ENCODE measurements at regions of chr7 and their contacts with region 1.

Region 1: DNA sequence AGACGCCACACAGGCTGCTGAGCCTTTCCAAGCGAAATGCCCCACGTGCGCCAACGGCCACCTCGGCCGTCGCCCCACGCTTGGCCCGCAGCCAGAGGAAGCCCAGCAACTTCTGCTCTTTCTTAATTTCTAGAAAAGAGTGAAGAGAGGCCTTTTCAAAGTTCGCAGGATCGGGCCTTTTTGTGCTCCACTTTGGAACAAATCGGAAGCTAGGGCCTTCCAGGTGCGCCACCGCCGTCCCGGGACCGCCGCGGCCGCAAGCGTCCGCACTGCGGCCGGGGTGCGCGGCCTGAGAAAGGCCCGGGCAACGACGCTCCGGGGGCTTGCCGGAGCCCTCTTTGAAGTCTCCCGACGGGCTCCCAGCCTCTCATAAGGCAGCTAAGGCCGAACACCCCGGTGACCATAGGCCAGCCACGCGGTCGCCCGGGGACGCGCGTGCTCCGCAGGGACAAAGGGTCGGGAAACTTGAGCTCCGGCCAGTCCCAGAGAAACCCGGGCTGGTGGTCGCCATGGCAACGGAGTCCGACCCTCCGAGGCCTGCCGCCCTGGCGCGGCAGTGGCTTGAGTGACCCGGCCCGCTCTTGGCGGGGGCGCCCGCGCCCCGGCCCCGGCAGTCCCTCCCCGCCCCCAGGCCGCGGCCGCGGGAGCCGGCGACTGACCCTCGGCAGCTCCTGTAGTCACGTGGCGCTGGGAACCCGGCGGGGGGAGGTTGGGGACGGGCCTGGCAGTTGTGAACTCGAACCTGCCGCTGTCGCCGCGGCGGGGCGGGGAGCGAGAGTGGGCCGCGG is at the start of gene REPIN1:
- DNase-seq: peak; percentile 58 to 91 (median 73)
- ATAC-seq: peak; percentile 45
- H3K4me3 ChIP-seq: peak within 1 kb of the TSS; percentile 83
- H3K4me3 Mint-ChIP-seq: peak within 1 kb of the TSS; percentile 99
- H3K27ac ChIP-seq: peak within 1 kb of the TSS; percentile 40 to 80
- H3K27ac Mint-ChIP-seq: peak within 1 kb of the TSS; percentile 96
- H3K4me1 ChIP-seq: peaks cover 47% of the 10 kb centered on the region
- H3K4me1 Mint-ChIP-seq: peaks cover 61% of the 10 kb centered on the region
- H3K27me3 ChIP-seq: no peaks in the 10 kb centered on the region
- H3K27me3 Mint-ChIP-seq: no peaks in the 10 kb centered on the region
- CTCF ChIP-seq: no peak
- total RNA-seq, gene REPIN1: 58.2 to 59.8 TPM

Region 2: DNA sequence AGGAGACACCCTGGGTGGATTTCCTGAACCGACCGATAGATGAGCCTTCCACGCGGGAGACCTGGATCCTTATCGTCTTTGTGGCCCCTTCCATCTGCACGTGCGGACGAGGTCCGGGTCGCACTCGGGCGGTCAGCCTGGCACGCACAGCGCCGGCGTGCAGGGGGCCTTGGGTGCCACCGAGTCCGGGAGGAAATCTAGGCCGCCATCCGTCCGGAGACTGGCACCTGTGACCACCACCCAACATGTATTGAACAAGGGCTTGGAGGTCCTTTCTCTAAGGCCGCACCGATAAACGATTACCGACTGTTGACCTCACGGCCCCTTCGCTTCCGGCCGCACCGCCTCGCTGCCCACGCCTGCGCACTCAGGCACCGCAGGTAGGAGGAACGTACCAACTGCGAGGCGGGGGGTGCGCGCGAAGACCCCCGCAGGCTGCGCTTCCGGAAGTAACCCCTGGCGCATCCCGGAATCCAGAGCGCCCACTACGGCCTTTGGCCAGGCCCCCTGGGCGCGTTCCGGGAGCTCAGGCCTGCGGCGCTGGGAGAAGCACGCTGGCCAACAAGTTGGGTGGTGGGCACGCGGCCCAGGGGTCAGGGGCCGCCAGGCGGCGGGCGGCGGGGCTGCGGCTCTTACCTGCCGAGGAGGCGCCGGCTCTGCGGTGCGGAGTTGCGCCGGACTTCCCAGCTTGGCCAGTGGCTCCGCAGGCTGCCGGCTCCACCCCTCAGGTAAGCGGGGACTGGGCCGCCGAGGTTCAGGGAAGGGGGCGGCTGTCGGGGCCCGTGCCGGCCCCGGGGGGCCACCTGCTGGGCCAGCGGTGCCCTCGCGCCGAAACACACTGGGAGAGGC is 45.2 kb before region 1 on chr7 and contains the starts of genes ACTR3C and LRRC61:
- CTCF ChIA-PET with region 1: no interaction called
- POLR2A ChIA-PET with region 1: no interaction called
- intact Hi-C with region 1: loop called in 1 of 2 experiments (anchors 5 kb)
- DNase-seq: peak; percentile 24 to 77 (median 54)
- ATAC-seq: peak; percentile 55
- H3K4me3 ChIP-seq: peak within 1 kb of the TSS; percentile 97
- H3K4me3 Mint-ChIP-seq: peak within 1 kb of the TSS; percentile 96
- H3K27ac ChIP-seq: peak within 1 kb of the TSS; percentile 77 to 79
- H3K27ac Mint-ChIP-seq: peak within 1 kb of the TSS; percentile 92
- H3K4me1 ChIP-seq: peaks cover 42% of the 10 kb centered on the region
- H3K4me1 Mint-ChIP-seq: peaks cover 42% of the 10 kb centered on the region
- H3K27me3 ChIP-seq: no peaks in the 10 kb centered on the region
- H3K27me3 Mint-ChIP-seq: no peaks in the 10 kb centered on the region
- CTCF ChIP-seq: peak; percentile 23
- total RNA-seq, gene ACTR3C: 1.9 to 3.4 TPM
- total RNA-seq, gene LRRC61: 3.1 to 5.0 TPM

Region 3: DNA sequence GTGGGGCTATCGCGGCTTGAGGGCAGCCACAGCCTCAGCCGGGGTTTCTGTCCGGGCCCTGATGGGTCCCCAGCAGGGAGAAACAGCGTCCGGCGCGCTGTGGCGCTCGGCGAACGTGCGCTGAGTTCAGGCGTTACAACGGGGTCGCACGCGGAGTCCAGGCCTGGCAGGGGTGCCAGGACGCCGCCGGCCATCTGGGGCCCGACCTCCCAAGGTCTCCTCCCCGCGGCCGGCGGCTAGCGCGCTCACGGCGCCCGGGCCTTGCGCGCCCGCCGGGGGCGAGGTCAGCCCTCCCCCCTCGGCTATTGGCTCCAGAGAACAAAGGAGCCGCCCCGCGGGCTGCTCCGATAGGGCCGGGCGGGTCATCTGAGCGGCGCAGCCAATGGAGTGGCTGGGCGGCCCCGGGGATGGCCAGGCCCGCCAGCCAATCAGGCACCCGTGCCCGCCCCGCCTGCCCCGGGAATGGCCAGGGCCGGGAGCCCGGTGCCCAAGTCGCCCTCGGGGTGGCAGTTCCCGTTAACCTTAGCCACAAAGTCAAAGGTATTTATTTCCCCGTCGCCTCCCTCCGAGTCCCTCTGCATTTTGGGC is 10.7 kb after region 1 on chr7 and contains the start of gene ZNF775:
- CTCF ChIA-PET with region 1: interaction called, 6 read pairs
- POLR2A ChIA-PET with region 1: interaction called, 29 read pairs
- intact Hi-C with region 1: no loop called
- DNase-seq: peak; percentile 80 to 95 (median 90)
- ATAC-seq: peak; percentile 94
- H3K4me3 ChIP-seq: peak within 1 kb of the TSS; percentile 85
- H3K4me3 Mint-ChIP-seq: peak within 1 kb of the TSS; percentile 90
- H3K27ac ChIP-seq: peak within 1 kb of the TSS; percentile 54 to 55
- H3K27ac Mint-ChIP-seq: peak within 1 kb of the TSS; percentile 84
- H3K4me1 ChIP-seq: peaks cover 46% of the 10 kb centered on the region
- H3K4me1 Mint-ChIP-seq: peaks cover 65% of the 10 kb centered on the region
- H3K27me3 ChIP-seq: no peaks in the 10 kb centered on the region
- H3K27me3 Mint-ChIP-seq: no peaks in the 10 kb centered on the region
- CTCF ChIP-seq: no peak
- total RNA-seq, gene ZNF775: 0.38 to 0.45 TPM

Measured in CD4-positive, alpha-beta T cell (primary cell).